ENCODE measurements at regions of chr2 and their contacts with region 1.

Region 1: DNA sequence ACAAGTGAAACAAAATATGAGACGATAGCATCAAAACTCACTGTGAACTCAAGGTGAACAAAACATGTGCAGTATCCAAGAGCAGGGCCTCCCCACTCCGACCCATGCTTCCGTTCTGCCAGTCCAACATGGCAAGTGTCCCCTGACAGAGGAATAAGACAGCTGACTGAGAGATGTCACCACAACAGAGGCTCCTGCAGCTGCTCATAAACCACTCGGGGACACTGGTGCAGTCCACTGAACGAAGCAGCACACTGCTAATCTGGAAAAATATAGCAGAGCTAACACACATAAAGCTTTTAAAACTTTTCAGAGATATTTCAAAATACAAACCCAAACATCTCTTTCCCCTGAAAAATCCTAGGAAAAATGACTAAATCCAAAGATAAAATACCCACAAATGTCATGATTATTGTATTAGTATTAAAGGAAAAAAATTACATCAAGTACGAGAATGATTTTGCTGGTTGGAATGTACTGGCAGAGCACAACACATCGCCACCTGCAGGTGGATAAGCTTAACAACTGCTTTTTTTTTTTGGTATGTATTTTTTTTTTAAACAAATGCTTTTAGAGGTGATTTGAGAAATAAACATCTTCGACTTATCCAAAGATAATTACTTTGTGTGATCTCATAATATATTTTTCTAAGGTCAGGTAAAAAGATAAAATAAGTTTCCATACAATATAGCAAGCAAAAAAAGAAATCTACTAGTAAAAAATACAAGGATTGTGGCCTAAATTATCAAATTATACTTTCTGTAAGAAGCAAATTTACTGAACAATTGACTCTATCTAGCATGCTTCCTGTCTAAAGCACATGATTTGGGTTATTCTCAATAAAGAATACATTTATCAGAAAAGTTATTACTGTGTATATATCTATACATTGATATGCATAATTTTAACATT is 18.6 kb downstream of the THADA start:
- DNase-seq: peak; percentile 51
- ATAC-seq: no peak
- H3K4me3 ChIP-seq: no peak overlapping the region
- H3K27ac ChIP-seq: no peak overlapping the region
- H3K4me1 ChIP-seq: no peaks in the 10 kb centered on the region
- H3K27me3 ChIP-seq: no peaks in the 10 kb centered on the region
- CTCF ChIP-seq: peak; percentile 88

Region 2: GRCh38 chr2:42828487-42829425 is 748.5 kb before region 1 on chr2:
- CTCF ChIA-PET with region 1: no interaction called
- POLR2A ChIA-PET with region 1: no interaction called
- intact Hi-C with region 1: loop called (anchors 5 kb)
- DNase-seq: peak; percentile 76
- ATAC-seq: peak; percentile 75
- H3K4me3 ChIP-seq: no peak overlapping the region
- H3K27ac ChIP-seq: no peak overlapping the region
- H3K4me1 ChIP-seq: peaks cover 12% of the 10 kb centered on the region
- H3K27me3 ChIP-seq: no peaks in the 10 kb centered on the region
- CTCF ChIP-seq: peak; percentile 93